Ascending aorta (tissue), 2 donors: ENCODE measurements at regions of chr11 and their contacts with region 1.

Region 1: GRCh38 chr11:45846974-45847910 is at the start of gene CRY2:
- DNase-seq: peak; percentile 98 to 100
- H3K4me3 ChIP-seq: peak within 1 kb of the TSS; percentile 92 to 97
- H3K27ac ChIP-seq: peak within 1 kb of the TSS; percentile 97 to 98
- H3K4me1 ChIP-seq: peaks cover 12 to 44% of the 10 kb centered on the region in 2 donors
- H3K27me3 ChIP-seq: no peaks in the 10 kb centered on the region
- CTCF ChIP-seq: no peak
- total RNA-seq, gene CRY2: 29.6 TPM

Region 2: DNA sequence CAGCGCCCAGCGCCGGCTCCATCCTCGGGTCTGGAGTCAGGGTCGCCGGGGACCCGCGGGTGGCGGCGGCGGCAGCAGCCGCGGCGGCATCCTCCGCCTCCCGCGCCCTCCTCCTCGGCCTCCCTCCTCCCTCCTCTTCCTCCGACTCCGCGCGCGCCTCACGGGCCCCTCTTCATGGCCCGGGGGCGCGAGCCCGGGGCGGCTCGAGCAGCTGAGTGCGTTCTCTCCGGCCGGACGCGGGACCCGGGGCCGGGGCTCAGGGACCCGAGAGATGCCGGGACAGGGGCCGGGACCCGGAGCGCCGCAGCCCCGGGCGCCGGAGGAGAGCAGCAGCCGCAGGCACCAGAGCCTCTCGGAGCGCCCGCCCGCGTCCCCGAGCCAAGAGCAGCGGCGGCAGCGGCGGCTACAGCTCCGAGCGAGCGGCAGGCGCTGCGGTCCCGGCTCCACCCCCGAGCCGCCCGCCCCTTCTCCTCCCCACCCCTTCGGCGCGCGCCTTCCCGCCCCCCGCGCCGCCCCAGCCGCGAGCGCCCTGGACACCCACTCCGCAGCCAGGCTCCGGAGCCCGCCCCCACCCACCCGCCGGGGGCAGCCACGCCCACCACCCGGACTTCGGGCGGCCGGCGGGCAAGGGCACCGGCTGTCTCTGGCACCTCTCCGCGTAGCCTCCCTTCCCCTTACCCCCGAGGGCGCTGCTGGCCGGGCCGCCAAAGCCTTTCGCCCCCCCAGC is 181.9 kb before region 1 on chr11 and contains the start of gene CHST1:
- intact Hi-C with region 1: loop called (anchors 2 kb)
- DNase-seq: peak in 1 of 2 donors; percentile 85
- H3K4me3 ChIP-seq: peak within 1 kb of the TSS; percentile 62 to 78
- H3K27ac ChIP-seq: peak within 1 kb of the TSS; percentile 64 to 79
- H3K4me1 ChIP-seq: peaks cover 0 to 27% of the 10 kb centered on the region in 2 donors
- H3K27me3 ChIP-seq: no peaks in the 10 kb centered on the region
- CTCF ChIP-seq: no peak
- total RNA-seq, gene CHST1: 40.2 TPM

Region 3: DNA sequence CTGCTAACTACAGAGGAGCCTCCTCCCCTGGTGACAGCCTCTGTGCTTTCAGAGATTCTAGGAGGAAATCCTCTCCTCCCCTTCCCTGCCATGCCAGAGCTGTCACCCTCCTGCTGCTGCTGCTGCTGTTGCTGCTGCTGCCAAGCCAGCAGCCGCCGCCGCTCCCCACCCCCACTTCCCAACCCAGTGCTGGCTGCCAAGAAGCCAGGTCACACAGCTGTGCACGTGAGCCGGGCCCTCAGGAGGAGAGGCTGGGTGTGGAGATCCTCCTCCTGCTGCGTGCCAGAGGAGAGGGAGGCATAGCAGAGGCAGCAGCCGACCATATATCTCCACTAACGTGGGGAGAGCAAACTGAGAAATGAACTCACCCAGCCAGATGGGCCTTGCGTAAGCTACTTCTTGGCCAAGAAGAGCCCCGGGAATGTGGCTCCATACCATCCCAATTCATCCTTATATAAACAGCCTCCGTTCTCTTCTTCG is 12.5 kb after region 1 on chr11:
- intact Hi-C with region 1: loop called (anchors 1 kb)
- DNase-seq: peak; percentile 71 to 92
- H3K4me3 ChIP-seq: peak overlapping the region in 1 of 2 donors; percentile 17
- H3K27ac ChIP-seq: peak overlapping the region; percentile 78 to 86
- H3K4me1 ChIP-seq: peaks cover 29 to 55% of the 10 kb centered on the region in 2 donors
- H3K27me3 ChIP-seq: no peaks in the 10 kb centered on the region
- CTCF ChIP-seq: no peak

Region 4: GRCh38 chr11:45917623-45918330 is 70.5 kb after region 1 on chr11 and contains the start of gene PEX16:
- intact Hi-C with region 1: loop called (anchors 1 kb)
- DNase-seq: peak; percentile 93 to 99
- H3K4me3 ChIP-seq: peak within 1 kb of the TSS; percentile 67 to 91
- H3K27ac ChIP-seq: peak within 1 kb of the TSS; percentile 90 to 91
- H3K4me1 ChIP-seq: peaks cover 5 to 18% of the 10 kb centered on the region in 2 donors
- H3K27me3 ChIP-seq: peaks cover 11% of the 10 kb centered on the region
- CTCF ChIP-seq: no peak
- total RNA-seq, gene PEX16: 77.9 TPM

Region 5: GRCh38 chr11:46121724-46122477 is 274.7 kb after region 1 on chr11:
- intact Hi-C with region 1: loop called (anchors 5 kb)
- DNase-seq: peak; percentile 30 to 87
- H3K4me3 ChIP-seq: peak overlapping the region; percentile 69 to 95
- H3K27ac ChIP-seq: peak overlapping the region; percentile 58 to 95
- H3K4me1 ChIP-seq: peaks cover 0 to 15% of the 10 kb centered on the region in 2 donors
- H3K27me3 ChIP-seq: no peaks in the 10 kb centered on the region
- CTCF ChIP-seq: no peak

Region 6: GRCh38 chr11:47186076-47186936 is 1339.1 kb after region 1 on chr11 and contains the start of gene PACSIN3:
- intact Hi-C with region 1: loop called (anchors 10 kb)
- DNase-seq: no peak
- H3K4me3 ChIP-seq: peak within 1 kb of the TSS; percentile 72 to 87
- H3K27ac ChIP-seq: peak within 1 kb of the TSS; percentile 93 to 95
- H3K4me1 ChIP-seq: peaks cover 4 to 31% of the 10 kb centered on the region in 2 donors
- H3K27me3 ChIP-seq: no peaks in the 10 kb centered on the region
- CTCF ChIP-seq: peak in 1 of 3 experiments; percentile 18
- total RNA-seq, gene PACSIN3: 32.7 TPM